ENCODE measurements at regions of chr16 and their contacts with region 1.

Region 1: GRCh38 chr16:88743693-88744576 is 37.6 kb downstream of the CTU2 start:
- DNase-seq: peak; percentile 83 to 87
- H3K4me3 ChIP-seq: no peak overlapping the region
- H3K27ac ChIP-seq: no peak overlapping the region
- H3K4me1 ChIP-seq: peaks cover 0 to 26% of the 10 kb centered on the region in 2 donors
- H3K27me3 ChIP-seq: no peaks in the 10 kb centered on the region
- CTCF ChIP-seq: peak; percentile 76 to 91 (median 81)
- POLR2A ChIP-seq: no peak

Region 2: GRCh38 chr16:88527186-88527936 is 216.6 kb before region 1 on chr16:
- intact Hi-C with region 1: no loop called
- DNase-seq: peak; percentile 76 to 84
- H3K4me3 ChIP-seq: no peak overlapping the region
- H3K27ac ChIP-seq: no peak overlapping the region
- H3K4me1 ChIP-seq: peaks cover 8 to 12% of the 10 kb centered on the region in 2 donors
- H3K27me3 ChIP-seq: no peaks in the 10 kb centered on the region
- CTCF ChIP-seq: peak; percentile 75 to 92 (median 82)
- POLR2A ChIP-seq: no peak

Region 3: DNA sequence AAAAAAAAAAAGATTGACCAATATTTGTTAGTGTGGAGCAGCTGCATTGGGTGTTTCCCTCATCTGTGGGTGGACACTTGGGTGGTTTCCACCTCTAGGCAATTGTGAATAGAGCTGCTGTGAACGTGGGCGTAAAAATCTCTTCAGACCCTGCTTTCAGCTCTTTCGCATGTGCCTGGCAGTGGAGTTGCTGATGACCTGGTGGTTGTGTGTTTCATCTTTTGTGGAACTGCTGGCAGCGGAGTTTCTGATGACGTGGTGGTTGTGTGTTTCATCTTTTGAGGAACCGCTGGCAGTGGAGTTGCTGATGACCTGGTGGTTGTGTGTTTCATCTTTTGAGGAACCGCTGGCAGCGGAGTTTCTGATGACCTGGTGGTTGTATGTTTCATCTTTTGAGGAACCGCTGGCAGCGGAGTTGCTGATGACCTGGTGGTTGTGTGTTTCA is 152.3 kb before region 1 on chr16:
- intact Hi-C with region 1: no loop called
- DNase-seq: peak in 1 of 2 donors; percentile 17
- H3K4me3 ChIP-seq: no peak overlapping the region
- H3K27ac ChIP-seq: no peak overlapping the region
- H3K4me1 ChIP-seq: no peaks in the 10 kb centered on the region
- H3K27me3 ChIP-seq: no peaks in the 10 kb centered on the region
- CTCF ChIP-seq: no peak
- POLR2A ChIP-seq: no peak

Region 4: GRCh38 chr16:88785106-88785924 is 41.4 kb after region 1 on chr16 and contains the start of gene PIEZO1:
- intact Hi-C with region 1: loop called (anchors 2 kb)
- DNase-seq: peak; percentile 73 to 79
- H3K4me3 ChIP-seq: peak within 1 kb of the TSS; percentile 53 to 88 (median 68)
- H3K27ac ChIP-seq: peak within 1 kb of the TSS; percentile 59 to 82 (median 78)
- H3K4me1 ChIP-seq: peaks cover 14 to 38% of the 10 kb centered on the region in 2 donors
- H3K27me3 ChIP-seq: no peaks in the 10 kb centered on the region
- CTCF ChIP-seq: peak; percentile 68 to 97 (median 92)
- POLR2A ChIP-seq: peak in 1 of 2 donors; percentile 58
- total RNA-seq, gene PIEZO1: 81.2 to 145 (median 113) TPM